ENCODE measurements at regions of chr10 and their contacts with region 1.

Region 1: GRCh38 chr10:68208424-68209042 is 23.4 kb downstream of the ATOH7 start:
- DNase-seq: no peak
- H3K4me3 ChIP-seq: no peak overlapping the region
- H3K27ac ChIP-seq: no peak overlapping the region
- H3K27me3 ChIP-seq: no peaks in the 10 kb centered on the region
- CTCF ChIP-seq: peak; percentile 72

Region 2: GRCh38 chr10:67452892-67453291 is 755.6 kb before region 1 on chr10:
- CTCF ChIA-PET with region 1: no interaction called
- POLR2A ChIA-PET with region 1: no interaction called
- DNase-seq: no peak
- H3K4me3 ChIP-seq: no peak overlapping the region
- H3K27ac ChIP-seq: no peak overlapping the region
- H3K27me3 ChIP-seq: no peaks in the 10 kb centered on the region
- CTCF ChIP-seq: no peak

Region 3: DNA sequence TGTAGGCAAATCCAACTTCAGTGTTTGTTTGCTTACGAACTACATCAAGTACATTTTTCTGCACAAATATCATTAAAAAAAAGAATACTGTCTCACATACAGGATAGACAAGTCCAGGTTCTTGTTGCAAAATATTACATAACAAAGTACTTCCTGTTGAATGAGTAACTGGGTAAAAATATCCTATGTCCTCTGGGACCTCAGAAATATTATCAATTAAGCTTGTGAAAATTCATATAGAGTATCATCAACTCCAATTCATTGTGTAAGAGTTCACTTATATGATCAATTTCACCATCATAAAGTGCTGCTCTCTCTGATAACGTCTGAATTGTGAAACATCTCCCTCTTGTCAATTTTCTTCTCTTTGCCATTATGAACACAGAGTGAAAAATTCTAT is 156.1 kb before region 1 on chr10:
- CTCF ChIA-PET with region 1: interaction called, 14 read pairs
- POLR2A ChIA-PET with region 1: interaction called, 3 read pairs
- DNase-seq: no peak
- H3K4me3 ChIP-seq: no peak overlapping the region
- H3K27ac ChIP-seq: no peak overlapping the region
- H3K27me3 ChIP-seq: no peaks in the 10 kb centered on the region
- CTCF ChIP-seq: no peak

Region 4: DNA sequence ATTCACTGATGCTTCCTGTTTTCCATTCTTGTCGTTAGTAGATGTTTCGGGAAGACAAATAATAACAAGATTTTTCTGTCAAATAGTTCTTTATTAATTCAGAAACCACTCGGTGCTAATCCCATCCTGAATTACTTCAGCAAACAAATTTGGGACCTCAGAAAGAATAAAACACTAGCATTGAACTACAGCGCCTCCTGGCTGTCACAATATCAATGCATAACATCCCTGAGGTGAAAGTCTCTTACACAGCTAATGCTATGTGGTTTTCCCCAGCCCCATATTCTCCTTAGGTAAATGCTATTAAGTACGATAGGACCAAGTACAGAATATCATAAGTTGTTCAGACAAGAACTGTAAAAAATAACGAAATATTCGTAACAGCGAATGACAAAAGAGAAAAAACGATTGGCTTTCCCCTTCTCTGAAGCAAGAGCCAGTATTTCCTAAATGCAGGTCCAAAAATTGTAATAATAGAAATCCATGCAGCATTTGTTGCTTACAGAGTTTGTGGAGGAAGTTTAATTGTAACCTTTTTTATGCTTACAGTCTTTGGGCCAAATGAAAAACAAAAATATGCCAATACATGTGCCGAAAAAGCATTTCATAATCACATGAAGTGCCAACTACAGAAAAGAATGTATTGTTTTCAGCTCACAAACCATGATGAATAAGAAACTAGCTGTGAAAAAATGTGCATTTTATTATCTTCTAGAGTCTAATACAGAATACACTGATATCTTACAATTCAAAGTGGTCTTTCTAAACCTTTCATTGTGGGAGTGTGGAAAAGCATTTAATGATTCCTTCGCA is 52.0 kb before region 1 on chr10:
- CTCF ChIA-PET with region 1: interaction called, 12 read pairs
- POLR2A ChIA-PET with region 1: no interaction called
- DNase-seq: no peak
- H3K4me3 ChIP-seq: no peak overlapping the region
- H3K27ac ChIP-seq: no peak overlapping the region
- H3K27me3 ChIP-seq: no peaks in the 10 kb centered on the region
- CTCF ChIP-seq: peak; percentile 81

Region 5: DNA sequence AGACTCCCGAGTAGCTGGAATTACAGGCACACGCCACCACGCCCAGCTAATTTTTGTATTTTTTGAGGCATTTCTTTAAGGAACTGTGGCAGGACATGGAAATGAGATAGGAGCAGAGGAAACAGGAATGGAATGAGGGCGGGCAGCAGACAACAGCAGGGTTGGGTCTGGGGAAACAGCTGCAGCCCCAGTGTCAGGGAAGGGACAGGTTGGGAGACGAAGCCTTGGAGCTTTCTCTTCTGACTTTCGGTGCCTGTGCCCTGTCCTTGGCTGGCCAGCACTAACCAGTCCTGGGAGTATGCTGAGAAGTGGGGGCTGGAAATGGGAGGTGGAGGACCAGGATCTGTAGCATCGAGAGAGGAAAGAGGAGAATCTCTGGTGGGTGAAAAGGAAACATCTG is 24.0 kb before region 1 on chr10:
- CTCF ChIA-PET with region 1: interaction called, 11 read pairs
- POLR2A ChIA-PET with region 1: no interaction called
- DNase-seq: no peak
- H3K4me3 ChIP-seq: no peak overlapping the region
- H3K27ac ChIP-seq: no peak overlapping the region
- H3K27me3 ChIP-seq: no peaks in the 10 kb centered on the region
- CTCF ChIP-seq: no peak

Region 6: DNA sequence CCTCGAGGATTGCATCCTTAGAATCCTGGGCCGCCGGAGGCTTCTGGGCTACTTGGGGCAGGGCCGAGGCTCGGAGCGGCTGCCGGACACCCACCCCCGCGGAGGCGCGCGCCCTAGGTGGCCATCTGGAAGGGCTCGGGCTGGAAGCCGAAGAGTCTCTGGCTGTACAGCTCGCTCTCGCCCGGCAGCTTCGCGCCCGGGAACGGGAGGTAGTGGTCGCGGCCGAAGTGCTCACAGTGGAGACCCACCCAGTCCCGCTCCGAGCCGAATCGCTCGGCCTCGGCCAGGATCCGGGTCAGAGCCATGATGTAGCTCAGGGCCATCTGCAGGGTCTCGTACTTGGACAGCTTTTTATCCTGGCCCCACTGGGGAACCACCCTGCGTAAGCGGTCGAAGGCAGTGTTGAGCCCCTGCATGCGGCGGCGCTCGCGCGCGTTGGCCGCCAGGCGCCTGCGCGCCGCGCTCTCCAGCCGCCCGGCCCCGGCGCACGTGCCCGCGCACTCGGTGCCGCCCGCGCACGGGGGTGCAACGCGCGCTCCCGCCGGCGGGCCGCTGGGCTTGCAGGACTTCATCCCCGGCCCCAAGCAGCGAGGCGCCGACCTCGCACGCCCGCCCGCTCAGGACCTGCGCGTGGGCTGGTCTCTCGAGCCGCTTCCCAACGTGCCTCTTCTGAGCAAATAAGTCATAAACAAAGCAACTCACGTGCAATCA is 22.7 kb after region 1 on chr10:
- CTCF ChIA-PET with region 1: interaction called, 21 read pairs
- POLR2A ChIA-PET with region 1: no interaction called
- DNase-seq: no peak
- H3K4me3 ChIP-seq: peak overlapping the region; percentile 79
- H3K27ac ChIP-seq: peak overlapping the region; percentile 88
- H3K27me3 ChIP-seq: peaks cover 11% of the 10 kb centered on the region
- CTCF ChIP-seq: peak; percentile 21; the same call in 1 of the 2 replicates

Region 7: DNA sequence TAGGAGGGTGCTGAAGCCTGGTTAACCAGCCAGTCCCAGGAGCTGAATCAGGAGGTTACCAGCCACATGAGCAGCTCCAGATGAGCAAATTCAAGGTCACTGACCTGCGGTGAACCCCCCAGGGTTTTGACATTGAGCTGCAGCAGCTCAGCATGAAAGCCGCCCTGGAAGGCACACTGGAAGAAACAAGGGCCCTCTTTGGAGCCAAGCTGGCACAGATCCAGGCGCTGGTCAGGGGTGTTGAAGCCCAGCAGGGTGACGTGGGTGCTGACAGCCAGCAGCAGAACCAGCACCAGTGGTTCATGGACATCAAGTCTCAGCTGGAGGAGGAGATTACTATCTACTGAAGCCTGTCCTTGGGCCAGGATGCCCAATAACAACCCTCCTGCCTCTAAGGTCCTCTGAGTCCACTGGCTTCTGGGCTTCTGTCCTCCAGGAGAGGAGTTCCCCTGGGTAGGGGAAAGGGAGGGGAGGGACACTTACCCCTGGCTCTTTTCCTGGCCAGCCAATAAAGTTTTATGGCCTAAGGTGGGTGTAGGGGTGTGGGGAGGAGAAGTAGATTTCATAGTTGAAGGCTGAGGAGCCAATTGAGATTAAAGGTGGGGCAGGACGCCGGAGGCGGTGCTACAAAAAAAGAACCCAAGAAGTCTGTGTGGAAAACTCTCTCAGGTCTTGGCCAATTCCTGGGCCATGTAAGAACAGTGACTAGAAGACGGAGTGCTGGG is 52.8 kb after region 1 on chr10:
- CTCF ChIA-PET with region 1: interaction called, 10 read pairs
- POLR2A ChIA-PET with region 1: no interaction called
- DNase-seq: no peak
- H3K4me3 ChIP-seq: no peak overlapping the region
- H3K27ac ChIP-seq: no peak overlapping the region
- H3K27me3 ChIP-seq: peaks cover 2% of the 10 kb centered on the region
- CTCF ChIP-seq: no peak

Region 8: DNA sequence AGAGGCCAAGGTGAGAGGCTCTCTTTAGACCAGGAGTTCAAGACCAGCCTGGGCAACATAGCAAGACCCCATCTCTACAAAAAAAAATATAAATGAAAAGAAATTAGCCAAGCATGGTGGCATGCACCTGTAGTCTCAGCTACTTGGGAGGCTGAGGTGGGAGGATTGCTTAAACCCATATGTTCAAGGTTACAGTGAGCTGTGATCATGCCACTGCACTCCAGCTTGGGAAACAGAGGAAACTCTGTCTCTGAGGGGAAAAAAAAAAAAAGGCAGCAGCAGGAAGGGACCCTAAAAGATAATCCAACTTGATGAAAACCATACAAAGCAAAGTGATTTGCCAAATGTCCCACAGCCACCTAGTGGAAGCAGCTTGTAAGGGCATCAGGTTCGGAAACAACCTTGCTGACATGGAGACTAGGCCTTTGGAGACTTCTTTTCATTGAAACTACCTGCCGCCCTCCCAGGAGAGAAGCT is 139.8 kb after region 1 on chr10:
- CTCF ChIA-PET with region 1: interaction called, 26 read pairs
- POLR2A ChIA-PET with region 1: no interaction called
- DNase-seq: no peak
- H3K4me3 ChIP-seq: no peak overlapping the region
- H3K27ac ChIP-seq: no peak overlapping the region
- H3K27me3 ChIP-seq: no peaks in the 10 kb centered on the region
- CTCF ChIP-seq: peak; percentile 82

Region 9: DNA sequence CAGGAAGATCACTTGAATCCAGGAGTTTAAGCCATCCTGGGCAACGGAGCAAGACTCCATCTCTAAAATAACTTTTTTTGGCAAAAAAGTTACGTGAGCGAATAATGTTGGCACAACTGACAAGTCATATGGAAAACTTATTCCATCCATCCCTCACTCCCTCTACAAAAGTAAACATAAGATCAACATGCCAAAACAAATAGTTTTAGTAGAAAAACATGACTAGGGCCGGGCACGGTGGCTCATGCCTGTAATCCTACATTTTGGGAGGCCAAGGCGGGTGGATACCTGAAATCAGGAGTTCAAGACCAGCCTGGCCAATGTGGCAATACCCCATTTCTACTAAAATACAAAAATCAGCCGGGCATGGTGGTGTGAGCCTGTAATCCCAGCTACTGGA is 293.2 kb after region 1 on chr10:
- CTCF ChIA-PET with region 1: no interaction called
- POLR2A ChIA-PET with region 1: no interaction called
- DNase-seq: no peak
- H3K4me3 ChIP-seq: no peak overlapping the region
- H3K27ac ChIP-seq: no peak overlapping the region
- H3K27me3 ChIP-seq: no peaks in the 10 kb centered on the region
- CTCF ChIP-seq: no peak

Measured in AG04450 (cell line).